PC-3 (cell line): ENCODE measurements at regions of chr2 and their contacts with region 1.

Region 1: GRCh38 chr2:196511258-196512168 is 128.0 kb upstream of the CCDC150 start:
- DNase-seq: no peak
- ATAC-seq: no peak; the same call in 1 of the 2 replicates
- H3K4me3 ChIP-seq: no peak overlapping the region
- H3K27ac ChIP-seq: no peak overlapping the region
- H3K4me1 ChIP-seq: peaks cover 13% of the 10 kb centered on the region
- H3K27me3 ChIP-seq: no peaks in the 10 kb centered on the region
- CTCF ChIP-seq: no peak

Region 2: DNA sequence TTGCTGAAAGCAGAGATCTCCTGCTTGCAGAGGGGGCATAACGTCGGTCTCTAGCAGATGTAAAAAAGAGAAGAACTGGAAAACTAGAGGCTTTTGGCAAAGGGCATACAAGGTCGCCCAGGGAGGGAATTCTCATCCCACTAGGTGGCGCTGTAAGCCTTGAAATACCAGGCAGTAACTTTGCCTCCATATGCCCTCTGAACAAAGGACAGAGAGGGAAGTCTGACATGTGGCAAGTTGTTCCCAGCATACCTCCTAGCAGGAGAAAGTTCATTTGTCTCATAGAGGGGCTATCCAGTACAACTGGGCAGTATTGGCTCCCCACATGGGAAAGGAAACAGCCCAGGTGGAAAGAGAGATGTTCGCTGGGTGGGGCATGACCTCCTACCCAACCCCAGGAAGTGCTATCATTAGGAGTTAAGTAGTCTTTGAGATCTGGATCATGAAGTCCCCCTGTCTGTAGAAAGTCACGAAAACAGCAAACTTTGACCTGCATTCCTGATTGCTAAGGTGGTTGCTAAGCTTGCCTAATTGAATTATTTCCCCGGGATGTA is 380.1 kb before region 1 on chr2:
- CTCF ChIA-PET with region 1: no interaction called
- POLR2A ChIA-PET with region 1: no interaction called
- intact Hi-C with region 1: no loop called
- DNase-seq: peak; percentile 71
- ATAC-seq: peak; percentile 65
- H3K4me3 ChIP-seq: no peak overlapping the region
- H3K27ac ChIP-seq: no peak overlapping the region
- H3K4me1 ChIP-seq: no peaks in the 10 kb centered on the region
- H3K27me3 ChIP-seq: no peaks in the 10 kb centered on the region
- CTCF ChIP-seq: peak; percentile 72

Region 3: DNA sequence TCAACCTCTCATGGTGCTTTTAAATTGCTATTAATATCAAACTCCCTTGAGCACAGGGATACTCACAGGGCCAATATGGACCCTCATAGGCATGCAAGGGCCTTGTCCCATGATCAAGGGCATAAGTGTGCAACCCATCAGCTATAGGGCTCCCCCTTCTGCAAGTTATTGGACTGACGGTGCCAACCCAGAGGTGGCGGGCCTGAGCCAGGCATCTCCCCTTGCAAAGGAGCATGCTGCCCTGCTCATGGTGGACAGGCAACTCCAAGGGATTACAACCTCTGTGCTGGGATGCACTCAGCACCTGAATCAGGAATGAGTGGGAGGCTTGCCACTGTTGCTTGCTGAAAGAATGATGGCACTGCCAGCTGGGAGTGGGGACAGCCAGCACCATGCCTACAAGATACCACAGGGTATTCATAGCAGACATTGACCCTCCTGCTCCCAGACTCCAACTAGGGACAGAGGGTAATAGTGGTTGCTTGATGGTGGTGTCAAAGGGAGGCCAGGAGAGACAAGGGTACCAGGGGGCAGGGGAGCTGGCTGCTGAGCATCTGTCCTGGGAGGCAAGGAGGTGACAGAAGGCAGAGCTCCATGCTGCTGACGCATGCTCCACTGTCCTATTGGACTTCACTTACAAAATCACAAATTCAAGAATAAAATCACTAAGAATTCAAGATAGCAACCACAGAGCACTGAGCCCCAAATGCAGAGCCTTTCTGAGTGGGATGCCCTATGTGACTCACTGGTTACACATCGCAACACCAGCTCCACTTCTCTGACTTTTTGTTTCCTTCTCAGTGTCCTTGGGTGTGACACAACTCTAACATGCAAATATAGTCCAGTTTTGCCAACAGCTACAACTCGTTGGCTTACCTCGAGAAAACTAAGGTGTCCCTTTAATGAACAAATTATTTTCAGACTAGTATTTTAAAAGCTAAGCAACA is 29.1 kb before region 1 on chr2:
- CTCF ChIA-PET with region 1: no interaction called
- POLR2A ChIA-PET with region 1: interaction called, 21 read pairs
- intact Hi-C with region 1: no loop called
- DNase-seq: peak; percentile 59
- ATAC-seq: peak; percentile 93
- H3K4me3 ChIP-seq: no peak overlapping the region
- H3K27ac ChIP-seq: no peak overlapping the region
- H3K4me1 ChIP-seq: no peaks in the 10 kb centered on the region
- H3K27me3 ChIP-seq: peaks cover 4% of the 10 kb centered on the region; the same call in 1 of the 2 replicates
- CTCF ChIP-seq: no peak